ENCODE measurements at regions of chr6 and their contacts with region 1.

Region 1: DNA sequence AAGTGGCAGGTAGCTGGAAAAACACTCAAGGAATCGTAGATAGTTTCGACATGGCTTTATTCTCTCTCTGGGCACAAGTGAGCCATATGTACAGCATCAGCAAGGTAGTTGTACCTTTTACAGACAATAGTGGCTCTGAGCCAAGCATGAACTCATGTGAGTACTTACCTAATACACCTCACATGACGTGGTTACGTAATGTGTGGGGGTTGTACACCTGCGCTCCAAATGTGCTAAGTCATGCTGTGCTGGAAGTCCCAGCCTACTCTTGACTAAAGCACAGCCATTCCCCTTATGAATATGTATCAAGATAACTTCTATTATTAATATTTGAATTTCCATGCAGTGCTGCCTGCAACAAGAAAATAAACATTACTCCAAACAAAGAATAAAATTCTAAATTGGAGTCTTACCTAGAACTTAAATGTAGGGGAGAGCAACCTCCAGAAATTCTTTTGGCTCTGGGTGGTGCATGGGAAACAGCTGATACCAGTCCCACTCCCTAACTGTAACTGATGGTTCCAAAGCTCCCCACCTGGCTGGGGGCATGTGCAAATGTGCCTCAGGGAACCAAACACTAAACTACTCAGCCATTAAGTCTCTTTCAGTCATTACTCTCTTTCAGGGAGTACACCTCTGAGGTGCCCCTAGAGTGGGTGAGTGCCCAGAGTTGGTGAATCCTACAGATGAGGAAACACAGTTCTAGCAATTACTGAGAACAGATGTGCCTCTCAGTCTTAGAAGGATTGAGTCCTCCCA is 79.0 kb upstream of the HMGN3 start:
- DNase-seq: peak; percentile 2
- H3K4me3 ChIP-seq: no peak overlapping the region
- H3K27ac ChIP-seq: no peak overlapping the region
- H3K4me1 ChIP-seq: no peaks in the 10 kb centered on the region
- CTCF ChIP-seq: no peak

Region 2: DNA sequence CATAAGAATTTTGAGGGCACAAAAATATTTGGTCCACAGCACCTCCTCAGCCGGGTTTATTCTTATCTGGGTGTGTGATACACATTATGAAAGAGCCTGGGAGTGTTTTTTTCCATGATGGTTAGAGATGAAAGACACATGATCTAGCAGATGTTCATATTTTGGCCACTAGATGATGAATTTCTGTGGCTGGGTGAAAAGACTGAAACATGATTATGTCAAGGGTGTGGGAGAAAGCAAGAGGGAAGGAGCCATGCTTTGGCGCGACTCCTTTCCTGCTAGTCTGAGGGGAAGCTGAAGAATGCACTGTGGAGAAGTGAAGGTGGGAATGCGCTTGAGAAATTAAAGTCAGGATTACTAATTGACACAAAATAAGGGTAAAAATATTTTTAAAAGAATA is 420.0 kb after region 1 on chr6:
- CTCF ChIA-PET with region 1: no interaction called
- POLR2A ChIA-PET with region 1: no interaction called
- intact Hi-C with region 1: no loop called
- DNase-seq: no peak
- H3K4me3 ChIP-seq: no peak overlapping the region
- H3K27ac ChIP-seq: no peak overlapping the region
- H3K4me1 ChIP-seq: no peaks in the 10 kb centered on the region
- CTCF ChIP-seq: no peak

Region 3: GRCh38 chr6:80325742-80326141 is 1012.3 kb after region 1 on chr6:
- CTCF ChIA-PET with region 1: no interaction called
- POLR2A ChIA-PET with region 1: no interaction called
- intact Hi-C with region 1: loop called (anchors 5 kb)
- DNase-seq: no peak
- H3K4me3 ChIP-seq: no peak overlapping the region
- H3K27ac ChIP-seq: no peak overlapping the region
- H3K4me1 ChIP-seq: no peaks in the 10 kb centered on the region
- CTCF ChIP-seq: no peak